ENCODE measurements at regions of chr7 and their contacts with region 1.

Region 1: DNA sequence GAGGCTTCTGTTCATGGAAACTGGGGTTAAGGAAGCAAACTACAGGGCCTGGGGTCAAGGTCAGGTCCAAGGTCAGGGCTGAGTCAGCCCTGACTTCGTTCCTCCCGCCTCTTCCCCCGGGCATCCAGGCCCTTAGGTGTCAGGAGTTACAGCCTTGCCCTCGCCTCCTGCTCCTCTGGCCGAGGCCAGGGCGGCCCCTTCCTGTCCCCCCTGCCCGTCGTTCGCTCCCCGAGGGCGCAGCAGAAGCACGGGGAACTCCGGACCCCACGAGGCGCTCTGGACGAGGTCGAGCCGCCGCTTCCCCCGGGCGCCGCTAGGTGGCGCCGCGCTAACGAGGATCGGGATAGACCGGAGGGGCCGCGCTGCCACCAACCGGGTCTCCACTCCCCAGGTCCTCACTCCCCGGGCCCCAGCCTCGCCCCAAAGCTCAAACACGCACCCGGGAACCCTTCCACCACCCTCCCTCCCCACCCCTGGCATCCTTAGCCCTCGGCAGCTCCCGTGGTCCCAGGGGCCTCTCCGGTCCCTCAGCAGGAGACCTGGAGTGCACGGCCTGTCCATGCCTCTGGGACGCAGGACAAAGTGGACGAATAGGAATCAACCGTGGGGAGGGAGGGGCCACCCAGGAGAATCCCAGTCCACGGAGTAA is 59.2 kb upstream of the MYL10 start:
- DNase-seq: peak; percentile 60 to 90 (median 80)
- ATAC-seq: peak; percentile 91 to 98
- H3K4me3 Mint-ChIP-seq: no peak overlapping the region
- H3K27ac Mint-ChIP-seq: no peak overlapping the region
- H3K4me1 Mint-ChIP-seq: peaks cover 0 to 5% (median under 1%) of the 10 kb centered on the region in 4 donors
- H3K27me3 Mint-ChIP-seq: peaks cover 0 to 4% (median 0%) of the 10 kb centered on the region in 5 donors

Region 2: GRCh38 chr7:101815835-101816493 is 127.7 kb after region 1 on chr7:
- POLR2A ChIA-PET with region 1: interaction called, 10 read pairs
- DNase-seq: peak; percentile 60 to 83 (median 72)
- ATAC-seq: peak; percentile 74 to 75
- H3K4me3 Mint-ChIP-seq: peak overlapping the region; percentile 72 to 94 (median 80)
- H3K27ac Mint-ChIP-seq: peak overlapping the region in 5 of 10 donors; percentile 51 to 84 (median 78)
- H3K4me1 Mint-ChIP-seq: peaks cover 20 to 39% (median 37%) of the 10 kb centered on the region in 4 donors
- H3K27me3 Mint-ChIP-seq: no peaks in the 10 kb centered on the region